Dendritic cell treated with granulocyte-macrophage colony-stimulating factor and Interleukin-4, amounts not matched to agents 40 ng/mL and 50 ng/mL, for 4 days (primary cell): ENCODE measurements at regions of chr5 and their contacts with region 1.

Region 1: DNA sequence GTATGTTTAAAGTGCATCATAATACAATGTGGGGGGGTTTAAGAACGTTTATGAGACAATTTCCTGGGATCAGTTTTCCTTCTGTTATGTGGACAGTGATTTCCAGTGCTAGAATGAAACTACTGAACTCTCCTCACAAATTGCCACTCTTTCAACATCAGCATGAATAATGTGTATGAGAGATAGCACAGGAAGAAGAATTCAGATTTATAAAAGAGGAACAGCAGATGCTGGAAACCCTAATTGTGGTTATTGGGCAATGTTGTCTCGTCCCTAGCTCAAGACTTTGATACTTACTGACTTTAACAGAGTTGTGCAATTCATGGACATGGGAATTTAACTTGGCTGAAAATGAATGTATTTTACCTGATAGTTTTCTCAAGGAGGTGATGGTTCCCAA is 410.8 kb upstream of the MEF2C start:
- H3K4me3 Mint-ChIP-seq: peak overlapping the region; percentile 62
- H3K27ac Mint-ChIP-seq: peak overlapping the region; percentile 82
- H3K4me1 Mint-ChIP-seq: peaks cover 25% of the 10 kb centered on the region
- H3K27me3 Mint-ChIP-seq: no peaks in the 10 kb centered on the region

Region 2: GRCh38 chr5:88872971-88873370 is 420.8 kb before region 1 on chr5:
- intact Hi-C with region 1: no loop called
- H3K4me3 Mint-ChIP-seq: no peak overlapping the region
- H3K27ac Mint-ChIP-seq: no peak overlapping the region
- H3K4me1 Mint-ChIP-seq: peaks cover 8% of the 10 kb centered on the region
- H3K27me3 Mint-ChIP-seq: no peaks in the 10 kb centered on the region

Region 3: DNA sequence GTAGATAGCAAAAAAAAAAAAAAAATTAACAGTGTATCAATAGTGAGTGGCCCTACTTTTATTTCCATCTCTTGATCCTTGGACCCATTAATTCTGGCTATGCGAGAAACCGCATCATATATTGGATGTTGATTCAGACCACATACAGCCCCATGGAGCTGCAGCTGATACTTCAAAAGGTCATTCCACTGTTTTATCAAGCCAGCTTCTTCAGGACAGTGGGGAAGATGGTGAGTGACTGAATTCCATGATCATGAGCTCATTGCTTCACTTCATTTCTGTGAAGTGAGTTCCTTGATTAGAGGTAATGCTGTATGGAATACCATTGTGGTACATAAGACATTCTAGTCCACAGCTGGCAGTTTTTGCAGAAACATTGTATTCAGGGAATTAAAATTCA is 188.0 kb before region 1 on chr5:
- intact Hi-C with region 1: loop called (anchors 10 kb)
- H3K4me3 Mint-ChIP-seq: no peak overlapping the region
- H3K27ac Mint-ChIP-seq: no peak overlapping the region
- H3K4me1 Mint-ChIP-seq: peaks cover 34% of the 10 kb centered on the region
- H3K27me3 Mint-ChIP-seq: no peaks in the 10 kb centered on the region